Panc1 (cell line): ENCODE measurements at regions of chr14 and their contacts with region 1.

Region 1: DNA sequence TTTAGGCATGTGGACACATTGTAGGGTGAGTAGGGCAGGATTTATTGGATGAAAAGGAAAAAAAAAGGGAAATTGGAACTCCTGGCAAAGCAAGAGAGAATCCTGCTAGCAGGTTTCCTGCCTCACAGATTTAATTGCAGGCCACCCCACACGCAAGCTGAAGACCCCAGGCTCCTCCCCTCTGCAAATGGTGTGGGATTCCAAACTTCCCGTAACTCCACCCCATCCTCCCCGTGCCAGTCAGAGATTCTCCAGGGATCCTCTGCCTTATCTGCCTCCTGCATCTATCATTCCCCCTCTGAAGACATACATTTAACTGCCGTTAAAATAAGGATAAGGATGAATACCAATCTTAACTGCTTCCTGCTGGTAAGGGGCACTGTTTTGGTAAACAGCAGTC is 249.8 kb upstream of the GARIN2 start:
- DNase-seq: no peak
- ATAC-seq: no peak
- H3K4me3 ChIP-seq: no peak overlapping the region
- H3K27ac ChIP-seq: no peak overlapping the region
- H3K4me1 ChIP-seq: no peaks in the 10 kb centered on the region
- H3K27me3 ChIP-seq: no peaks in the 10 kb centered on the region
- CTCF ChIP-seq: no peak

Region 2: GRCh38 chr14:65650826-65651225 is 1288.6 kb before region 1 on chr14:
- CTCF ChIA-PET with region 1: no interaction called
- POLR2A ChIA-PET with region 1: interaction called, 19 read pairs
- in situ Hi-C with region 1: no loop called
- intact Hi-C with region 1: no loop called
- DNase-seq: no peak
- ATAC-seq: no peak
- H3K4me3 ChIP-seq: no peak overlapping the region
- H3K27ac ChIP-seq: no peak overlapping the region
- H3K4me1 ChIP-seq: no peaks in the 10 kb centered on the region
- H3K27me3 ChIP-seq: no peaks in the 10 kb centered on the region
- CTCF ChIP-seq: no peak